ENCODE measurements at regions of chr7 and their contacts with region 1.

Region 1: DNA sequence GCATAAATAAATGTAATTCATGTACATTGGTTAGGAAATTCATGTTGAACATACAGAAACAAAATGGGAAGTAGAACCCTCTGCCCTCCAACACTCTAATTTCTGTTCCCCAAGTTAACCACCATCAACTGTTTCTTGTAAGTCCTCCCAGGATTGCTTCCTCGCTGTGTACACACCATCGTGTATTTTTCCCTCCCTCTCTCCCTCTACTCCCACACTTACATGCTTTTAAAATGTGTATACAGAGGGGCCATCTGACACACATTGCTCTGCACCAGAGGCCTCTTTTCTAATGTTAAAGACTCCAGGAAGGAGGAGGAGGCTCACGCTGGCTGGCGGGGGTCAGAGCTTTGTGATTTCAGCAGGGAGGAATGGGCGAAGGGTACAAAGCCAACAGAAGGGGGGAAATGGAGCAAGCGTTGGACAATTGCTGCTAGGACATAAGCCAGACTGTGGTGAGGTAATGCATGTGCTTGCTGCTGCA is 1.9 kb upstream of the EPHA1 start:
- DNase-seq: peak in 1 of 2 donors; percentile 86
- H3K4me3 ChIP-seq: no peak overlapping the region
- H3K27ac ChIP-seq: no peak overlapping the region
- H3K4me1 ChIP-seq: peaks cover 16 to 47% (median 39%) of the 10 kb centered on the region in 4 donors
- H3K27me3 ChIP-seq: no peaks in the 10 kb centered on the region
- CTCF ChIP-seq: no peak
- EP300 ChIP-seq: no peak
- POLR2A ChIP-seq: no peak

Region 2: DNA sequence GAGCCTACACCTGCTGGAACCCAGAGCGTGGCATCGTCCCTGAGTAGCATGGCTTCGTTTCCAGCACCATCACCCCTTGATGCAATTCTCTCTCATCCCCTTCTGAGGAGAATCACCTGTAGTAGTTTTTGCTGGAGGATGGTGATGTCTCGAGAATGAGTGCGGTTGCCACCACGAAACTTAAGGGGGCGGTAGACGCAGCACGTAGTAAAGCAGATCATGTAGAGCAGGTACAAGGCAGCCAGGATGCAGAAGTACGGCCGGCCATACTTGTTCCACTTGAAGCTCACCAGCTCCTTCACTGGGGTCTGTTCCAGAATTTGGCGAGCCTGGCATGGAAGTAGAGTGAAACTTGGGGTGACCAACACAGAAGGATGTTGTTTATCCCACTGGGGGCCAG is 485.1 kb before region 1 on chr7:
- intact Hi-C with region 1: no loop called
- DNase-seq: no peak
- H3K4me3 ChIP-seq: no peak overlapping the region
- H3K27ac ChIP-seq: no peak overlapping the region
- H3K4me1 ChIP-seq: no peaks in the 10 kb centered on the region
- H3K27me3 ChIP-seq: no peaks in the 10 kb centered on the region
- CTCF ChIP-seq: no peak
- EP300 ChIP-seq: no peak
- POLR2A ChIP-seq: no peak

Region 3: DNA sequence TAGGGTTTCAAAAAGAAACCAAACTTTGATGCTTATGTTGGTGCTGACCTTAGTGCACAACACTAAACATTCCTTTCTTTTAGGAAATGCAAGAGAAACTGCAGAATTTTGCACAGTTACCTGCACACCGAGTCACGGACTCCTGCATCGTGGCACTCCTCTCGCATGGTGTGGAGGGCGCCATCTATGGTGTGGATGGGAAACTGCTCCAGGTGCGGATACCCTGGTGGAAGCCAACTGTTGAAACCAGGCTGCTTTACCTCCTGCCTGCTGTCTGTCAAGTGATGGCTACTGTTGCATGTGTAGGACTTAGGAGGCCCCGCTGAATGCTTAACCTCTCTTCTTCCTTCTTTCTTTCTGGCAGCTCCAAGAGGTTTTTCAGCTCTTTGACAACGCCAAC is 110.7 kb before region 1 on chr7:
- intact Hi-C with region 1: no loop called
- DNase-seq: peak; percentile 38 to 64
- H3K4me3 ChIP-seq: no peak overlapping the region
- H3K27ac ChIP-seq: peak overlapping the region in 4 of 5 donors; percentile 46 to 74 (median 62)
- H3K4me1 ChIP-seq: peaks cover 12 to 55% (median 27%) of the 10 kb centered on the region in 4 donors
- H3K27me3 ChIP-seq: no peaks in the 10 kb centered on the region
- CTCF ChIP-seq: peak in 4 of 7 experiments; percentile 19 to 51 (median 36)
- EP300 ChIP-seq: no peak
- POLR2A ChIP-seq: no peak

Region 4: GRCh38 chr7:143375298-143376034 is 35.1 kb before region 1 on chr7:
- intact Hi-C with region 1: loop called (anchors 5 kb)
- DNase-seq: no peak
- H3K4me3 ChIP-seq: no peak overlapping the region
- H3K27ac ChIP-seq: peak overlapping the region; percentile 31 to 69 (median 58)
- H3K4me1 ChIP-seq: peaks cover 0 to 61% (median 16%) of the 10 kb centered on the region in 4 donors
- H3K27me3 ChIP-seq: no peaks in the 10 kb centered on the region
- CTCF ChIP-seq: no peak
- EP300 ChIP-seq: no peak
- POLR2A ChIP-seq: no peak

Region 5: DNA sequence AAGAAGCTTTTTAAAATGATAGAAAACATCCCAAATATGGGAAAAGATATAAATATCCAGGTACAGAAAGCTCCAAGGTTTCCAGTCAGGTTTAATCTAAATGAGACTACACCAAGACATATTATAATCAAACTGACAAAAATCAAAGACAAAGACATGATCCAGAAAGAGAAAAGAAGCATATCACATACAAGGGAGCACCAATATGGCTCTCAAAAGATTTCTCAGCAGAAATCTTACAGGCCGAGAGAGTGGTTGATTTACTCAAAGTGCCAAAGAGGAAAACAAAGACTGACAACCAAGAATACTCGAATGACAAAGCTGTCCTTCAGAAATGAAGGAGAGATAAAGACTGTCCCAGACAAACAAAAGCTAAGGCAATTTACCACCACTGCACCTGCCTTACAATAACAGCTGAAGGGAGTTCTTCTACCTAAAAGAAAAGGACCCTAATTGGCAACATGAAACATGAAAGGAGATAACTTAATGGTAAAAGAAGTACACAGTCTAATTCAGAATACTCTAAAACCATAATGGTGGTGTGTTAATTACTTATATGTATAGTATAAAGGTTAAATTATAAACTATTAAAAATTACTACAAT is 737.8 kb after region 1 on chr7:
- intact Hi-C with region 1: no loop called
- DNase-seq: no peak
- H3K4me3 ChIP-seq: no peak overlapping the region
- H3K27ac ChIP-seq: no peak overlapping the region
- H3K4me1 ChIP-seq: no peaks in the 10 kb centered on the region
- H3K27me3 ChIP-seq: no peaks in the 10 kb centered on the region
- CTCF ChIP-seq: no peak
- EP300 ChIP-seq: no peak
- POLR2A ChIP-seq: no peak